Motor neuron (in vitro differentiated cells): ENCODE measurements at regions of chr3 and their contacts with region 1.

Region 1: GRCh38 chr3:49428697-49429100 is 425 bp downstream of the NICN1 start:
- ATAC-seq: peak; percentile 1 to 54 (median 6)
- H3K4me3 ChIP-seq: peak overlapping the region; percentile 58 to 85 (median 68)
- H3K27ac ChIP-seq: peak overlapping the region; percentile 88 to 91
- H3K4me1 ChIP-seq: peaks cover 4 to 5% of the 10 kb centered on the region in 2 donors

Region 2: GRCh38 chr3:48989796-48990635 is 438.7 kb before region 1 on chr3 and contains the start of gene P4HTM:
- in situ Hi-C with region 1: loop called in 1 of 9 experiments (anchors 25 kb)
- ATAC-seq: peak; percentile 75 to 88 (median 86)
- H3K4me3 ChIP-seq: peak within 1 kb of the TSS; percentile 50 to 90 (median 57)
- H3K27ac ChIP-seq: peak within 1 kb of the TSS; percentile 83 to 87
- H3K4me1 ChIP-seq: peaks cover 17 to 22% of the 10 kb centered on the region in 2 donors
- total RNA-seq, gene P4HTM: 4.9 to 94.0 (median 29.6) TPM

Region 3: DNA sequence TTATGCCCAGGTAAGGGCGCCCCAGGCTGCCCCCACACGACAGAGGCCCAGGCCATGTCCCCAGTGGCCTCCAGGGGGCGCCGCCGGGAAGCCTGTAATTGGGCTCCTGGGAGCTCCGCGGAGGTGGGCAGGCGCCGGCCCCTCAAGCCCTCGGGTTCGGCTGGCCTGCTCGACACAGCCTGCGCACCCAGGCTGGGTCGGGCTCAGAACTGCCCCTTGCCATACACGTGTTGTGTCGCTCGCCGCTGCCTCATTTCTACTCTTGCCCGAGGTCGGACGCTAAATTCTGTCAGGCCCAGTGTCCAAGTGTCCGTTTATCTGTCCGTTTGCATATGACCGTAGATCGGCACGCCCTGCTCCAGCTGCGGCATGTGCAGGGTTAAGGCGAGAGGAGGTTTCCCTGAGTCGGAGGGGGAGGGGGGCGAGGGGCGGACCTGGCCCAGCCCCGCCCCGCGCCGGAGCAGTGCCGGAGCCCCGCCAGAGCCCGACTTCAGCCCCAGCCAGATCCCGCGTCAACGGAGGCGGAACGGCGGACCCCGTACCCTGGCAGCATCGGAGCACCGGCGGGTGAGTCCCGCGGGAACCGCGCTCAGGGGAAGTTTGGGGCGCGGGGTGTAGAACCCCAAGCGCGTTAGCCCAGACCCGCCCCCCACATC is 257.5 kb before region 1 on chr3 and contains the start of gene KLHDC8B:
- in situ Hi-C with region 1: loop called in 2 of 9 experiments (anchors 25 kb)
- ATAC-seq: peak; percentile 76 to 92 (median 82)
- H3K4me3 ChIP-seq: peak within 1 kb of the TSS; percentile 50 to 88 (median 84)
- H3K27ac ChIP-seq: peak within 1 kb of the TSS; percentile 83 to 88
- H3K4me1 ChIP-seq: peaks cover 39 to 45% of the 10 kb centered on the region in 2 donors
- total RNA-seq, gene KLHDC8B: 18.5 to 83.7 (median 37.7) TPM

Region 4: GRCh38 chr3:49339945-49340800 is 88.5 kb before region 1 on chr3 and contains the start of gene USP4:
- in situ Hi-C with region 1: loop called in 2 of 9 experiments (anchors 25 kb)
- ATAC-seq: peak; percentile 84 to 95 (median 93)
- H3K4me3 ChIP-seq: peak within 1 kb of the TSS; percentile 51 to 67 (median 55)
- H3K27ac ChIP-seq: peak within 1 kb of the TSS; percentile 86 to 89
- H3K4me1 ChIP-seq: peaks cover 13% of the 10 kb centered on the region in 2 donors
- total RNA-seq, gene USP4: 14.5 to 56.9 (median 20.0) TPM